Mammary epithelial cell (primary cell): ENCODE measurements at regions of chr6 and their contacts with region 1.

Region 1: GRCh38 chr6:30672445-30673253 is at the start of gene DHX16:
- DNase-seq: peak; percentile 97
- H3K4me3 ChIP-seq: peak within 1 kb of the TSS; percentile 54 to 98 (median 94)
- H3K27ac ChIP-seq: peak within 1 kb of the TSS; percentile 70
- H3K4me1 ChIP-seq: peaks cover 9% of the 10 kb centered on the region
- H3K27me3 ChIP-seq: no peaks in the 10 kb centered on the region
- CTCF ChIP-seq: peak; percentile 78 to 97
- total RNA-seq, gene DHX16: 26.0 to 30.9 TPM

Region 2: GRCh38 chr6:30489081-30490025 is 183.3 kb before region 1 on chr6 and contains the start of gene HLA-E:
- CTCF ChIA-PET with region 1: no interaction called
- dilution Hi-C with region 1: loop called (anchors 5 kb)
- in situ Hi-C with region 1: loop called in 1 of 2 experiments (anchors 10 kb)
- intact Hi-C with region 1: no loop called
- DNase-seq: peak; percentile 99
- H3K4me3 ChIP-seq: peak within 1 kb of the TSS; percentile 92 to 99 (median 93)
- H3K27ac ChIP-seq: peak within 1 kb of the TSS; percentile 93
- H3K4me1 ChIP-seq: peaks cover 12% of the 10 kb centered on the region
- H3K27me3 ChIP-seq: no peaks in the 10 kb centered on the region
- CTCF ChIP-seq: no peak
- total RNA-seq, gene HLA-E: 106 to 145 TPM

Region 3: DNA sequence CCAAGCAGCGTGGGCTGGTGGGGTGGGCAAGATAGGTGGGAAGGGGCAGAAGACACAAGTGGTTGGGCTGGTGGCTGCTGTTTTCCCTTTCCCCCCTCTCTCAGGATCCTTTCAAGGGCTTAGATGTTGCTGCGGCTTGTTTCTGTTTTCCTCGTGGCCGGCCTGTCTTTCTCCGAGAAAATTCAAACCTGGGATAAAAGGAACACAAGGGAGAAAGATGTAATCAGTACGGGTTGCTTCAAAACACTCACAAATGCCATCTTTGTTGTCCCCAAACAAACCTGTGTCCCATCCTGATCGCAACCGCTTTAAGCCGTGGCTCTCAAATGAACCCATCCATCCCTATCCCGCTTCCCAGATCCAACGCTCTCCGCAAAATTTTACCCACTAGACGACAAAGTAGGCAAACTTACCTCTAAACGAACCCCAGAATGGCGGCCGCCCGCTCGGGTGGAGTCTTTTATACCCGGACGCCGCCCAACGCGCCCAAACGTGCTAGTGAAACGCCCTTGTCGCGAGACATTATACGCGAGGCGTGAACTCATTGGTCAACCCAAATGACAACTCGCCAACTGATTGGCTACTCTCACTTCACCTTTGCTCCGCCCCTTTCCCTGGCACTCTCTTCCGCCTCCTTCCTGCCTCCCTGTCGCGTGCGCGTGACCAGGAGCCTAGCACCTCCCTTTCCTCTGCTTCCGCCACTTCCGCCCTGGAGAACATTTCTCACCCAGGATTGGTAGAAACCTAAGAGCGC is 55.7 kb before region 1 on chr6 and contains the start of gene PPP1R10:
- CTCF ChIA-PET with region 1: no interaction called
- dilution Hi-C with region 1: loop called (anchors 5 kb)
- in situ Hi-C with region 1: no loop called
- intact Hi-C with region 1: loop called (anchors 1 kb)
- DNase-seq: peak; percentile 100
- H3K4me3 ChIP-seq: peak within 1 kb of the TSS; percentile 70 to 99 (median 90)
- H3K27ac ChIP-seq: peak within 1 kb of the TSS; percentile 99
- H3K4me1 ChIP-seq: peaks cover 27% of the 10 kb centered on the region
- H3K27me3 ChIP-seq: no peaks in the 10 kb centered on the region
- CTCF ChIP-seq: no peak
- total RNA-seq, gene PPP1R10: 60.7 to 124 TPM

Region 4: DNA sequence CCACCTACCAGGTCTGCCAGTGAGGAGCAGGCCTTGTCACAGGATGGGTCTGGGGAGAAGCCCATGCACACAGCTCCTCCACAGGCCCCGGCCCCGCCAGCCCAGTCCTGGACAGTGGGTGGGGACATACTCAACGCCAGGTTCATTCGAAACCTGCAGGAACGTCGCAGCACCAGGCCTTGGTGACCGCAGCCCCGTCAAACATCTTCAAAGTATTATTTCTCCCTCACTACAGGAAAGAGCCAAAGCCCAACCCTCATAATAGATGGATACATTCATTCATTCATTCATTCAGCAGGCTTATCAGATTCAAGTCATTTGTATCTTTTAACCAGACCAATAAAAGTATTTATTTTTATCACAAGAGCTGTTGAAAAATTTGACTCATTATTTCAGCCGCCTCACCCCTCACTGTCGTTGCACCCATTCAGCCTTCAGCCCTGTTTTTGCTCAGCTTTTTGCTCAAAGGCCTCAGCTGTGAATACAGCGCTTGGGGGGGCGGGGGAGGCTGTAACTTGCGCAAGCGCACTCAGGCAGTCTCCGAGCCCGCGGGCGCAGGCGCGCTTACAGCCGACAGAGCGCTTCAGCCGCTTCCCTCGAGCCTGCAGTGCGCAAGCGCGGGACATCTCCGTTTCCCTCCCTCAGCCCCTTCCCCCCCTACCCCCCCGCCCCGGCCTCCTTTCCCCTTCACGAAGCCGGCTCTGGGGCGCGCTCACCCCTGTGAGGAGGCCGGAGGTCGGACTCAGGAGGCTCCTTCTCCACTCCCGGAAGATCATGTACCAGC is 26.0 kb before region 1 on chr6 and contains the start of gene C6orf136:
- CTCF ChIA-PET with region 1: no interaction called
- dilution Hi-C with region 1: no loop called
- in situ Hi-C with region 1: no loop called
- intact Hi-C with region 1: loop called (anchors 2 kb)
- DNase-seq: peak; percentile 83
- H3K4me3 ChIP-seq: peak within 1 kb of the TSS; percentile 81 to 100 (median 97)
- H3K27ac ChIP-seq: peak within 1 kb of the TSS; percentile 69
- H3K4me1 ChIP-seq: peaks cover 14% of the 10 kb centered on the region
- H3K27me3 ChIP-seq: no peaks in the 10 kb centered on the region
- CTCF ChIP-seq: no peak
- total RNA-seq, gene C6orf136: 1.8 to 11.2 TPM